ENCODE measurements at regions of chr22 and their contacts with region 1.

Region 1: DNA sequence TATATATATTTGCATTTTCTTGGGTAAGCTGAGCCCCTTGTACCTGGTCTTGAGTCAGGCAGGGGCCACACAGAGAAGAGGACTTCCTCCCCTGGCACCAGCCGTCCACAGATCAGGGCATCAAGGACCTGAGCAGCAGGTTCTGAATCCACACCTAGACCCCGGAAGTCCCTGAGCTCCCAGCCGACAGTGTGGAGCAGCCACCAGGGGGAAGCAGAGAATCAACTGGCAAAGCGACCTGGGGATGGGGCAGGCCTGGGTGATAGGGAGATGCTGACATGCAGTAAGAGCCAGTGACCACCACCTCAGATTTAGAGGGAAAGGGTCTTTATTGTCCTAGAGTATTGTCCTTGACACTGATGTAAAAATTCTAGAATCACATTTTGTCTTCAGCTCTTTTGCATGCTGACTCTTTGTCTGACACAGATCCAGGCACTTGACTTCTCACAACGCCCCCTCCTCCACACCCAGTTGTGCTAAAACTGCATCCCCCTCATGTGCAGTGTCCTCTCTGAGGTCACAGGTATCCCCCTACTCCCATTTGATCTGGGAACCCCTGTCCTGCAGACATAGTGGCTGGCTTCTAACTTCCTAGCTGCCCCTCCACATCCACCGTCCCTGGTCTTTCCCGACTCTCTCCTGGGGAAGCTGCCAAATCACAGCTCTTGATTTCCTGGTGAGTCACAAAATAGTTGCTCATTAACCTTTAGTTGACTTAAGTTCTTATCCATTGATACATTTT is 109.3 kb downstream of the GGTLC2 start:
- DNase-seq: no peak
- H3K4me3 ChIP-seq: no peak overlapping the region
- CTCF ChIP-seq: peak; percentile 72

Region 2: DNA sequence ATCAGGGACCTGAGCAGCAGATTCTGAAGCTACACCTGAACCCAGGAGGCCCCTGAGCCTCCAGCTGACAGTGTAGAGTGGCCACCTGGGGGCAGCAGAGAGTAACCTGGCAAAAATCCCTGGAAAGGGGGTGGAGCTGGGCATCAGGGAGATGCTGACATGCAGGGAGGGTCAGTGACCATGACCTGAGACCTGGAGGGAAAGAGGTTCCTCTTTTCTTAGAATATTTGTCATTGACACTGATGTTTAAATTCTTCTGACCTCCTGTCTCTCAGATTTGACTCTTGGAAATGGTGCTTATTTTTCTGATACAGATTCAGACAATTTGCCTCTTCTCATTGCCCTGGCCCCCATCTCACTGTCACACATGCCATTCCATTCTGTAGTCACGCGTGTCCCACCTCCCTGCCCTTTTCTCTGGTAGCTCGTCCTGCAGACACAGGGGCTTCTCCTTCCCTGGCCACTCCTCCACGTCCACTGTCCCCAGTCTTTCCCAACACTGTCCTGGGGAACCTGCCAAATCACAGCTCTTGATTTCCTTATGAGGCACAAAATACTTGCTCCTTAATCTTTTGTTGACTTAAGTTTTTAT is 16.7 kb after region 1 on chr22:
- CTCF ChIA-PET with region 1: interaction called, 19 read pairs
- POLR2A ChIA-PET with region 1: no interaction called
- DNase-seq: no peak
- H3K4me3 ChIP-seq: no peak overlapping the region
- CTCF ChIP-seq: peak; percentile 75

Region 3: GRCh38 chr22:22884010-22884887 is 130.6 kb after region 1 on chr22:
- CTCF ChIA-PET with region 1: interaction called, 14 read pairs
- POLR2A ChIA-PET with region 1: no interaction called
- DNase-seq: no peak
- H3K4me3 ChIP-seq: no peak overlapping the region
- CTCF ChIP-seq: peak; percentile 45

Measured in AG04449 (cell line).